Activated CD8-positive, alpha-beta T cell treated with anti-CD3 and anti-CD28 coated beads for 36 hours (primary cell): ENCODE measurements at regions of chr5 and their contacts with region 1.

Region 1: GRCh38 chr5:180718810-180719453 is 20.9 kb downstream of the OR2Y1 start:
- DNase-seq: peak; percentile 62
- ATAC-seq: no peak
- H3K4me3 Mint-ChIP-seq: no peak overlapping the region
- H3K27ac Mint-ChIP-seq: peak overlapping the region; percentile 30
- H3K4me1 Mint-ChIP-seq: peaks cover 27% of the 10 kb centered on the region
- H3K27me3 Mint-ChIP-seq: no peaks in the 10 kb centered on the region
- CTCF ChIP-seq: peak; percentile 79

Region 2: GRCh38 chr5:180605554-180606214 is 113.2 kb before region 1 on chr5:
- CTCF ChIA-PET with region 1: interaction called, 12 read pairs
- POLR2A ChIA-PET with region 1: no interaction called
- intact Hi-C with region 1: no loop called
- DNase-seq: peak; percentile 87
- ATAC-seq: peak; percentile 90
- H3K4me3 Mint-ChIP-seq: no peak overlapping the region
- H3K27ac Mint-ChIP-seq: no peak overlapping the region
- H3K4me1 Mint-ChIP-seq: peaks cover 6% of the 10 kb centered on the region
- H3K27me3 Mint-ChIP-seq: no peaks in the 10 kb centered on the region
- CTCF ChIP-seq: peak; percentile 85

Region 3: GRCh38 chr5:180649297-180650039 is 69.5 kb before region 1 on chr5 and contains the start of gene FLT4:
- CTCF ChIA-PET with region 1: interaction called, 10 read pairs
- POLR2A ChIA-PET with region 1: no interaction called
- intact Hi-C with region 1: no loop called
- DNase-seq: no peak
- ATAC-seq: peak; percentile 55
- H3K4me3 Mint-ChIP-seq: peak within 1 kb of the TSS; percentile 75
- H3K27ac Mint-ChIP-seq: no peak within 1 kb of the TSS
- H3K4me1 Mint-ChIP-seq: peaks cover 12% of the 10 kb centered on the region
- H3K27me3 Mint-ChIP-seq: peaks cover 28% of the 10 kb centered on the region
- CTCF ChIP-seq: no peak
- total RNA-seq, gene FLT4: 3.3 to 4.4 TPM

Region 4: DNA sequence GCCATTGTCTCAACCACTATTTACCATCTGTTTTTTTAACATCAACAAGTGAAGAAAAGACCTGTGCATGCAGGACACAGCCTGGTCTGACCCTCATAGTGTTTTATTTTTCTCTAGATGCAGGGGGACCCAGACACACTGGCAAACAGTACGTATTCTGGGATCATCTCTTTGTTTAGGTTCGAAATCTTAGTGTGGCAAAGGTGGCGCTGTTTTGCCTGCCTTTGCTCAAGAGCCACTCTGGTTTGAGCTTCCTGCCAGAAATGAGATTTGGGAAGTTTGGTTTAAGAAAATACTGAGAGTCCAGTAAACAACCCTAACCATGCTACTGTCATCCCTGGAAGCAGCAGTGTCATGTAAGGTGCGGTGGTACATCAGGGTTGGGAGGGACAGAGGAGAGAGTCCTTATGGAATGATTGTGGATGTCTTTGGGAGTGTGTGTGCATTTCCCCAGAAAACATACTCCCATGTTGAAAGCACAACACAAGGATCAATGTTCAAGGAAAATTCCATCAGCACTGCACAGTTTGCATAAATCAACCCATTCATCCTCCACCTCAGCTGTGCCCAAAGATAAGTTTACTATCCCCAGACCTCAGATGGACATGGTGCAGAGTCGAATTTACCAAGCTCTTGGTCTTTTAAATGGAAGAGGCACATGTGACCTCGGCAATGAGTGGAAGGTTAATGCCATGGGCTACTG is 35.6 kb before region 1 on chr5:
- CTCF ChIA-PET with region 1: interaction called, 21 read pairs
- POLR2A ChIA-PET with region 1: interaction called, 5 read pairs
- intact Hi-C with region 1: loop called (anchors 5 kb)
- DNase-seq: no peak
- ATAC-seq: no peak
- H3K4me3 Mint-ChIP-seq: no peak overlapping the region
- H3K27ac Mint-ChIP-seq: no peak overlapping the region
- H3K4me1 Mint-ChIP-seq: peaks cover 40% of the 10 kb centered on the region
- H3K27me3 Mint-ChIP-seq: no peaks in the 10 kb centered on the region
- CTCF ChIP-seq: no peak

Region 5: GRCh38 chr5:180689071-180689694 is 29.7 kb before region 1 on chr5:
- CTCF ChIA-PET with region 1: interaction called, 21 read pairs
- POLR2A ChIA-PET with region 1: interaction called, 5 read pairs
- intact Hi-C with region 1: loop called (anchors 5 kb)
- DNase-seq: peak; percentile 71
- ATAC-seq: peak; percentile 75
- H3K4me3 Mint-ChIP-seq: peak overlapping the region; percentile 69
- H3K27ac Mint-ChIP-seq: peak overlapping the region; percentile 80
- H3K4me1 Mint-ChIP-seq: peaks cover 70% of the 10 kb centered on the region
- H3K27me3 Mint-ChIP-seq: no peaks in the 10 kb centered on the region
- CTCF ChIP-seq: no peak

Region 6: GRCh38 chr5:180696116-180696515 is 22.8 kb before region 1 on chr5:
- CTCF ChIA-PET with region 1: interaction called, 11 read pairs
- POLR2A ChIA-PET with region 1: no interaction called
- intact Hi-C with region 1: no loop called
- DNase-seq: no peak
- ATAC-seq: no peak
- H3K4me3 Mint-ChIP-seq: no peak overlapping the region
- H3K27ac Mint-ChIP-seq: no peak overlapping the region
- H3K4me1 Mint-ChIP-seq: peaks cover 34% of the 10 kb centered on the region
- H3K27me3 Mint-ChIP-seq: no peaks in the 10 kb centered on the region
- CTCF ChIP-seq: no peak

Region 7: GRCh38 chr5:180816608-180817534 is 97.9 kb after region 1 on chr5:
- CTCF ChIA-PET with region 1: no interaction called
- POLR2A ChIA-PET with region 1: no interaction called
- intact Hi-C with region 1: no loop called
- DNase-seq: no peak
- ATAC-seq: no peak
- H3K4me3 Mint-ChIP-seq: peak overlapping the region; percentile 50
- H3K27ac Mint-ChIP-seq: peak overlapping the region; percentile 63
- H3K4me1 Mint-ChIP-seq: peaks cover 57% of the 10 kb centered on the region
- H3K27me3 Mint-ChIP-seq: no peaks in the 10 kb centered on the region
- CTCF ChIP-seq: no peak

Region 8: DNA sequence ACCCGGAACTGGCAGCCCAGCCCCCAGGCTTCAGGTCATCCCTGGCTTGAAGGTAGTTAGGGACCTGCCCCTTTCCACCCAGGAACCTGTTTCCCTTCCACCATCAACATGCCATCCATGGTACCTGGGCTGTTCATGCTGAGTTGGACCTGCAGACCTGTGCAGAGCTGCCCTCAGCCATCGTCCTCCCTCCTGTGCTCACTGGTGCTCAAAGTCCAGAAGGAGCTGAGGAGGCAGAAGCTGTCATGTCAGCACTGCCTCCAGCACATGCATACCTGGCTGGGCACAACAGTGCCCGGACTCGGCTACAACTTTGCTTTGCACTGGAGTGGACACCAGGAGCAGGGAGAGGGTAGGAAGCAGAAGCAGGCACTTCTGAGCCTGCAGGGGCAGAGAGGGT is 216.3 kb after region 1 on chr5:
- CTCF ChIA-PET with region 1: no interaction called
- POLR2A ChIA-PET with region 1: no interaction called
- intact Hi-C with region 1: no loop called
- DNase-seq: no peak
- ATAC-seq: no peak
- H3K4me3 Mint-ChIP-seq: no peak overlapping the region
- H3K27ac Mint-ChIP-seq: no peak overlapping the region
- H3K4me1 Mint-ChIP-seq: no peaks in the 10 kb centered on the region
- H3K27me3 Mint-ChIP-seq: peaks cover 8% of the 10 kb centered on the region
- CTCF ChIP-seq: no peak